Endothelial cell of umbilical vein (primary cell): ENCODE measurements at regions of chr10 and their contacts with region 1.

Region 1: GRCh38 chr10:63629363-63630084 is 108.3 kb downstream of the REEP3 start:
- DNase-seq: peak; percentile 98
- H3K4me3 ChIP-seq: peak overlapping the region; percentile 18 to 58 (median 47)
- H3K27ac ChIP-seq: peak overlapping the region; percentile 98
- H3K4me1 ChIP-seq: peaks cover 34% of the 10 kb centered on the region
- H3K27me3 ChIP-seq: no peaks in the 10 kb centered on the region
- CTCF ChIP-seq: peak; percentile 86 to 92
- POLR2A ChIP-seq: peak; percentile 27

Region 2: DNA sequence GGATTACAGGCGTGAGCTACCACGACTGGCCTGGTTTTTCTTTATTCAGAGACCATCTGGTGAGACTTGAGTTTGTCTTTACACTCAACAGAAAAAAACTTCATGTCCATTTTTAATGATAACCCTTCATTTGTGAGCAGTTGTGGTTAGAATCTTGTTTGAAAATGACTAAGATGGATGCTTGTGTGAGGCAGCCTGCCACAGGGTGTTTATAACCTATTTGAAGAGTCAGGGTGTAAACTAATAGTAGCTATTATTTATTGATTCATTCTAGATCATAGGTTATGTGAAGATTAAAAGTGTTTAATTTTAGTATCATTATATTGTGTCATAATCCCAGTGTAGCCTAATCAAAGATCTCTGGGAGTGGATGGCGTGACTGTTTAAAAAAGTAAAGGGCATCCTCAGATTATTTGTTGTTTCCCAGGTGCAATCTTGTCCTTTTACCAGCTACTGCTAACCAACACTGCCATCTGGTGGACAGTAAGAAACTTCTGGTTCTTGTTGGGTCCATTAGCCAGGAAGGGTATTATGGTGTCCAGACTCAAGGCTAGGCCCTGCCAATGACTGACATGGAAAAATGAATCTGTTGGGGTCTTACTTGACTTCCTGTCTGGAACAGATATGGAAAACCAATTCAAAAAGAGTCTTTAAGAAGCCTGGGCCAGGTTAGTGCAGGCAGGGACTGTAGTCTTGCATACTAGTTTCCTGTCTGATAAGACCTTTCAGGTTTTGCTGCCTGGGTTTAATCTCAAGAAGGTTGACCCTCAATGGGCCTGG is 471.5 kb before region 1 on chr10:
- CTCF ChIA-PET with region 1: interaction called, 10 read pairs
- POLR2A ChIA-PET with region 1: no interaction called
- dilution Hi-C with region 1: no loop called
- intact Hi-C with region 1: no loop called
- DNase-seq: peak; percentile 74
- H3K4me3 ChIP-seq: no peak overlapping the region
- H3K27ac ChIP-seq: no peak overlapping the region
- H3K4me1 ChIP-seq: no peaks in the 10 kb centered on the region
- H3K27me3 ChIP-seq: no peaks in the 10 kb centered on the region
- CTCF ChIP-seq: peak; percentile 65 to 71
- POLR2A ChIP-seq: no peak

Region 3: DNA sequence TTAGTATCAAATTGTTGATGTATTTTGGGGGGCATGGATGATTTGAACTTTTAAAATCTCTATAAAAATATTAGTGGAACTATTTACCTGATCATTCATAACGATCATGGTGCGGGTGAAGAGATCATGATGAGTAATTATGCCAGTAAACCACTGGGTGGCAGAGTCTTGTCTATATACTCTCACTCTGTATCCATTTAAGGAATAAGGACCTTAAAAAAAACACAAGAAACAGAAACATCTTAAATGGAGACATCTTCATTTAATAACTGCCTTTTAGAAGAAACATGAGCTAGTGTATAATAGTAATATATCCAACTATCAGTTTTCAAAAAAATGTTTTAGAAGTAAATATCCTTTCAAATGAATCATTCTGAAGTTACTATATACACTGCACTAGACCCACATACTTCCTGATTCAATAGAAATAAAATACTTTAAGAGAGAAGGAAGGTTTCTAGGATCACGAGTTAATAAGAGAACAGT is 412.4 kb before region 1 on chr10:
- CTCF ChIA-PET with region 1: interaction called, 32 read pairs
- POLR2A ChIA-PET with region 1: no interaction called
- dilution Hi-C with region 1: no loop called
- intact Hi-C with region 1: loop called (anchors 1 kb)
- DNase-seq: peak; percentile 74
- H3K4me3 ChIP-seq: no peak overlapping the region
- H3K27ac ChIP-seq: peak overlapping the region; percentile 30
- H3K4me1 ChIP-seq: peaks cover 4% of the 10 kb centered on the region
- H3K27me3 ChIP-seq: no peaks in the 10 kb centered on the region
- CTCF ChIP-seq: peak; percentile 34 to 38
- POLR2A ChIP-seq: no peak

Region 4: GRCh38 chr10:63430097-63430998 is 199.2 kb before region 1 on chr10:
- CTCF ChIA-PET with region 1: interaction called, 4 read pairs
- POLR2A ChIA-PET with region 1: no interaction called
- dilution Hi-C with region 1: no loop called
- intact Hi-C with region 1: loop called (anchors 1 kb)
- DNase-seq: peak; percentile 83
- H3K4me3 ChIP-seq: no peak overlapping the region
- H3K27ac ChIP-seq: peak overlapping the region; percentile 92
- H3K4me1 ChIP-seq: peaks cover 55% of the 10 kb centered on the region
- H3K27me3 ChIP-seq: no peaks in the 10 kb centered on the region
- CTCF ChIP-seq: no peak
- POLR2A ChIP-seq: no peak

Region 5: DNA sequence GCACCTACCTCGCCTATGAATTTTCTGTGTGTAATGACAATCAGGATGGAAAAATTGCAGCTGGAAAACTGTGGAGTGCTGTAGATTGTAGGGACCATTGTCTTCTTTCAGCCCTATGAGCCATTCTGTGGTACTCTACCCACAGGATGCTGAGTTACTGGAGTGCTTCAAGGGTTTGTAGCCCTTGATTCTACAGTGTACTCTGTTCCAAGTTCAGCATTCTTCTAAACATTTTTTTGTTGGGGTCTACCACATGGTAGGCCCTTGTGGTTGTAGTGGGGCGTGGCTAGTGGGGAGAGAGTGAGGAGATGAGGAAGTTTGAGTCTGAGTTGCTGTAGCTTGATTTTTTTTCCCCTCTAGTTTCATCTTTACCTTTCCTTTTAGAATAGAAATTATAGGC is 74.9 kb before region 1 on chr10:
- CTCF ChIA-PET with region 1: interaction called, 3 read pairs
- POLR2A ChIA-PET with region 1: no interaction called
- dilution Hi-C with region 1: no loop called
- intact Hi-C with region 1: loop called (anchors 1 kb)
- DNase-seq: peak; percentile 50
- H3K4me3 ChIP-seq: no peak overlapping the region
- H3K27ac ChIP-seq: peak overlapping the region; percentile 90
- H3K4me1 ChIP-seq: peaks cover 41% of the 10 kb centered on the region
- H3K27me3 ChIP-seq: no peaks in the 10 kb centered on the region
- CTCF ChIP-seq: no peak
- POLR2A ChIP-seq: no peak

Region 6: DNA sequence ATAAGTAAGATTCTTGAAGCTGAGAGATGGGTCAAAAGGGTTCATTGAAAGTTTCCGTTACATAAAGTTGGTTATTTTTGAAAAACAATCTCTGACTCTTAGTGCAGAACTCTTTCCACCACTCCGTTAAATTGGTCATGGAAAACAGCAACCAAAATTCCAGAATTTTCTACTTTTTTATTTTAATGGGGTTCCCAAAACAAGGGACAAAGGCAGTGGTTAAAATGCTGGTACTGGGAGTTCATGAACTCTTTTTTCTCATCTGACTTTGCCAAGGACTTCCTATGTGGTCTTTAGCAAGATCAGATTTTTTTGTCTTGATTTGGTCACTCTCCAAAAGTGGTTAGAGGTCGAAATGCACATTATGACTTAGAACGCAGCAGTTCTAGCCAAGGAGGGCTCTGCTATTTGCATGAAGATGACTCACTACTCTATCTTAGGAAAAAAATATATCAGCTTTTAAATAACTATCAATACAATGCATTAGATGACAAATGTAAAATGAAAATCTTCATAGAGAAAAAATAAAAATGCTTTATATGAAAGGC is 37.4 kb after region 1 on chr10:
- CTCF ChIA-PET with region 1: interaction called, 14 read pairs
- POLR2A ChIA-PET with region 1: interaction called, 5 read pairs
- dilution Hi-C with region 1: no loop called
- intact Hi-C with region 1: loop called (anchors 1 kb)
- DNase-seq: peak; percentile 92
- H3K4me3 ChIP-seq: no peak overlapping the region
- H3K27ac ChIP-seq: peak overlapping the region; percentile 40
- H3K4me1 ChIP-seq: peaks cover 34% of the 10 kb centered on the region
- H3K27me3 ChIP-seq: no peaks in the 10 kb centered on the region
- CTCF ChIP-seq: no peak
- POLR2A ChIP-seq: no peak

Region 7: DNA sequence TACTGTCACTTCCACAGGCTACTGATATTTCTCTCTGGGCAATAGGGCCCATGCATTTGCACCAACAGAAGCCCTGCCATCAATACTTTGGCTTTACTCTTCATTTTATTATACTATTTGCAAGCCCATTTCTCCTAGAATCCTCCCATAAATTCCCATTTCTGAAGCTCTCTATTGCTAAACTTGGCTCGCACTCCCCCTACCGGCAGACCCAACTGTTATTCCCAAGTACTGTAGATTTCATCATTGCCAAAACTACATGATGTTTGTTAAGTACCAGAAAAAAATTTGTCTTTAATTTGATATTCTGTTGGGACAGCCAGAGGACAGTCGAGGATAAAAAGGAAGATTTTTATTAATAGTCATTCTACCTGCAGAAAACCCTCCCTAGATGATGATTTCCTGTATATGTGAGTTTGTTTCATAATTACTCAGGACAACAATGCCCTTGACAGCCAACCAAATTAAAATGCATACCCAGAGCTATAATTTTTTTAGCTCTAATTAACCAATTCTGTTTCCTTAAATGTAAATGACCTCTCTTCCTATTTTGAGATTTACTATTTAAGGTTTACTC is 190.3 kb after region 1 on chr10:
- CTCF ChIA-PET with region 1: interaction called, 10 read pairs
- POLR2A ChIA-PET with region 1: no interaction called
- dilution Hi-C with region 1: no loop called
- intact Hi-C with region 1: no loop called
- DNase-seq: peak; percentile 78
- H3K4me3 ChIP-seq: no peak overlapping the region
- H3K27ac ChIP-seq: no peak overlapping the region
- H3K4me1 ChIP-seq: no peaks in the 10 kb centered on the region
- H3K27me3 ChIP-seq: peaks cover 11% of the 10 kb centered on the region in 2 experiments
- CTCF ChIP-seq: peak; percentile 74
- POLR2A ChIP-seq: no peak